RWPE1 (cell line): ENCODE measurements at regions of chr19 and their contacts with region 1.

Region 1: DNA sequence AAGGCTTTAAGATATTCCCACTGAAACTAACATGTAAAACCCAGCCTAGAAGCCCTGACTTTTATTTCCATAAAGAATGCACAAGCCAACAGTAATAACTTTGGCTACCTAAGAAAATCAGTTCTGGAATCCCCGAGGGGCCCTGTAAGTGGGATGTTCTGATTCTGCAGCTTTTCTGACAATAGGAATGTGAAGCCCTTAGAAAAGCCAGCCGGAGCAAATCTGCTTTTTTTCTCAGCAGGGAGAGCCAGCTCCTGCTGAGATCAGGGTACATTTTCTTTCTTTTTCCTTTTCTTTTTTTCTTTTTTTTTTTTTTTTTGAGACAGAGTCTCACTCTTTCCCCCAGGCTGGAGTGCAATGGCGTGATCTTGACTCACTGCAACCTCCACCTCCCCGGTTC is 8.0 kb upstream of the GARRE1 start:
- DNase-seq: no peak
- H3K27ac ChIP-seq: no peak overlapping the region
- CTCF ChIP-seq: no peak

Region 2: GRCh38 chr19:34155686-34156085 is 90.7 kb before region 1 on chr19:
- CTCF ChIA-PET with region 1: no interaction called
- POLR2A ChIA-PET with region 1: no interaction called
- DNase-seq: no peak
- H3K27ac ChIP-seq: no peak overlapping the region
- CTCF ChIP-seq: no peak

Region 3: DNA sequence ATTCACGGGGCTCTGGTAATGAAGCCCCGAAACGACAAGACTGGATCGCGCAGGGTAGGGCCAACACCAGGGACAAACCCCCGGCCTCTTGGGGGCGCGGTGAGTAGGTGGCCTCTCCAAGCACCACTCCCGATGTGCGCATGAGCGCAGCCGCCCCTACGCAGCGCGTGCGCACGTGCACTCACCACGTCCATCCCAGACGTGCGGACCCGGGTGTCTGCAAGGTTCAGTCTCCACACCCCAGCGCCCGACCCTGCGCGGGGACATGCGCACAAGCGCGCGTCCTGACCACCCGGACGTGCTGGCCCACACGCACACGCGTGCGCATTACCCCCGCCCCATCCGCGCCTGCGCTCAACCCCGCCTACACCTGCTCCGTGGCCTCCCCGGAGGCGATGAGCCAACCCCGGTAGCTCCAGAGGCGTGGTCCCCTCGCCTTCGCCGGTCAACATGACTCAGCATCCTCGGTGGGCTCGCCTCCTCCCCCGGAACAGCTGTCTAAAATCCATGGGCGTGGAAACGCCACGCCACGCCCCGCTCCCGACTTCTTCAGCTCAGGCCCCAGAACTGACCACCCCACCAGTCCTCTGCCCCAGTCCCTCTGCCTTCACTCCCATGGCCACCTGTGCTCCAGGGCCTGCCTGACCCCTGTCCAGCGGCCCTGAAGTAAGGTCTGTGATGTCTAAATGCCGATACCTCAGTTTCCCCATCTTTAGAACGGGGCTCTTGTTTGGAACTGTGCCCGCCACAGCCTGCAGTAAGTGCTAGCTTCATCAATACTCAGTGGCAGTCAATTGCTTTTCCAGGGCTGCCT is 113.0 kb after region 1 on chr19:
- CTCF ChIA-PET with region 1: no interaction called
- POLR2A ChIA-PET with region 1: interaction called, 15 read pairs
- DNase-seq: peak; percentile 97
- H3K27ac ChIP-seq: peak overlapping the region; percentile 89
- CTCF ChIP-seq: peak; percentile 67